GM18951 (cell line): ENCODE measurements at regions of chr2 and their contacts with region 1.

Region 1: DNA sequence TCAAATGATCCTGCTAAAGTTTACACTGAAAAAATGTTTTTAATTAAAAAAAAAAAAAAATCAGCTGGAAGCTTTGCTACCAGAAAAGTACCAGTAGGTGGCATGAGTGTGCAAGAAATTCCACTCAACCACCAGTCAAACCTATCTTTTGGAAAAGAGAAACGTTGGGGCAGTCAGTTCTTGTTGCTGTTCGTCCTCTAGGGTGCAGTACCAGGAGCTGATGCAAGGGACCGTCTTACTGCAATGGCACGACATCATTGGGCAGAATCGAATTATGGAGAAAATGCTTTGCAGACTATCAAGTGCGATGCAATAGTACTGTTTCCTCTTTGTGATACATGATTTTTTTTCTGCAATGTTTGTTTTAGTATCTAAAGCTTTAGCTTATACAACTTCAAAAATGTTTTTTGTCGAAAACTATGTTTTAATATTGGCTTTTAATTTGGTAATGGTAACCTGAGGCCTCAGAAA is 18.3 kb downstream of the YPEL5 start:
- POLR2A ChIP-seq: no peak

Region 2: GRCh38 chr2:31333527-31334183 is 1168.6 kb after region 1 on chr2:
- in situ Hi-C with region 1: loop called (anchors 25 kb)
- POLR2A ChIP-seq: no peak